ENCODE measurements at regions of chr18 and their contacts with region 1.

Region 1: DNA sequence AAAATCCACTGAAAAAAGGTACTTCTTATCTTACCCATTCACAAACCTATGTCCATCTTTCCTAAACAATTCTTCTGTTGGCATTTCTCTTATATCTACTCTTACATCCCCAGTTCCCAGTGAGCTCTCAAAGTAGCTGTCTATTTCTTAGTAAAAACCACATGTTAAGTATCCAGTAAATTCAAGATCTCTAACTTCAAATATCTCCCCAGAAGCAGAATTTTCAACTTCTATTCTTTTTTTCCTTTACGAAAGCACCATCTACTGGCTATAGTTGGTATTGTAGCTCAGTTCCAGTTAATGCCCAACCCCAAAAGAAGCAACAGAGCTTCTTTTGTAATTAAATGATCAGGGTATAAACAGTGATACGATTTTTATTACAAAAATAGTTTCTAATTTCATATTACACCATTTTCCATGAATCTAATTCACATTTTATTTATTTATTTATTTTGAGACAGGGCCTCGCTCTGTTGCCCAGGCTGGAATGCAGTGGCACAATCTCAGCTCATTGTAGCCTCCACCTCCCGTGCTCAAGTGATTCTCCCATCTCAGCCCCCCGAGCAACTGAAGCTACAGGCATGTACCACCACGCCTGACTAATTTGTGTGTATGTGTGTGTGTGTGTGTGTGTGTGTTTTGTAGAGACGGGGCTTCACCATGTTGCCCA is 28.5 kb downstream of the HRH4 start:
- DNase-seq: peak in 2 of 9 experiments; percentile 45 to 55
- ATAC-seq: peak; percentile 40
- H3K4me3 ChIP-seq: no peak overlapping the region
- H3K4me3 Mint-ChIP-seq: no peak overlapping the region
- H3K27ac ChIP-seq: no peak overlapping the region
- H3K27ac Mint-ChIP-seq: no peak overlapping the region
- H3K4me1 ChIP-seq: peaks cover 7% of the 10 kb centered on the region
- H3K4me1 Mint-ChIP-seq: peaks cover 16% of the 10 kb centered on the region
- H3K27me3 ChIP-seq: no peaks in the 10 kb centered on the region
- H3K27me3 Mint-ChIP-seq: peaks cover 8% of the 10 kb centered on the region
- CTCF ChIP-seq: peak; percentile 97

Region 2: DNA sequence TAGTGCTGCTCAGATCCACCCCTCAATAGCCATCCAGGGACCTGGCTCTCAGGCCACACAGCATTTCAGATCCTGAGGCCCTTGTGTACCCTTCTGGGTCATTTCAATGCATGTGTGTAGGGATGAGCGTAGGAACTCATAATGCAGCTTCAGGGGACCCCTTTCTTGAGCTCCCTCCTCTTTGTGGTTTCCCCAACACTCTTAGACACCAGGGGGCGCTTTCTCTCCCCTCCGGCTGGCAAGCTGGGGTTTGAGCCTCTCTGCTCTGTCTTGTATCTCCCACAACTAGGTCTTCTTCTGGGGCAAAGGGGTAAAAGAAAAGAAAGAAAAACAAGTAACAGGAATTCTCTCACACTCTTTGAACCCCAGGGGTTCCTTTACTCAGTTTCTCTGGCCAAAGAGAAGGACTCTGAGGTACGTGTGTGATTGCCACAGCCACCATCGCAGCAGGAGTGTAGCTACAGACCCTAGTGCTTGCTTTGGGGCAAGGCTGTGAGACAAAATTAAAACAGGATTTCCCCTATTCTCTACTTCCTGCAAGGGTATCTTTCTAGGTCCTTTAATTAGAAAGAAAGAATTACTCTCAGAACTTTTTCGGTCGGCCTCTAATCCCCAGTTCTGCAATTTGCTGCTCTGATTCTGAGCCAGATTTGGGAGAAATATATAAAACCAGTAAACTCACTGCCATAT is 312.1 kb before region 1 on chr18:
- CTCF ChIA-PET with region 1: interaction called, 15 read pairs
- POLR2A ChIA-PET with region 1: no interaction called
- intact Hi-C with region 1: loop called (anchors 5 to 10 kb)
- DNase-seq: peak in 6 of 9 experiments; percentile 22 to 47 (median 34)
- ATAC-seq: no peak
- H3K4me3 ChIP-seq: no peak overlapping the region
- H3K4me3 Mint-ChIP-seq: no peak overlapping the region
- H3K27ac ChIP-seq: no peak overlapping the region
- H3K27ac Mint-ChIP-seq: no peak overlapping the region
- H3K4me1 ChIP-seq: no peaks in the 10 kb centered on the region
- H3K4me1 Mint-ChIP-seq: no peaks in the 10 kb centered on the region
- H3K27me3 ChIP-seq: no peaks in the 10 kb centered on the region
- H3K27me3 Mint-ChIP-seq: peaks cover 4% of the 10 kb centered on the region
- CTCF ChIP-seq: no peak

Region 3: DNA sequence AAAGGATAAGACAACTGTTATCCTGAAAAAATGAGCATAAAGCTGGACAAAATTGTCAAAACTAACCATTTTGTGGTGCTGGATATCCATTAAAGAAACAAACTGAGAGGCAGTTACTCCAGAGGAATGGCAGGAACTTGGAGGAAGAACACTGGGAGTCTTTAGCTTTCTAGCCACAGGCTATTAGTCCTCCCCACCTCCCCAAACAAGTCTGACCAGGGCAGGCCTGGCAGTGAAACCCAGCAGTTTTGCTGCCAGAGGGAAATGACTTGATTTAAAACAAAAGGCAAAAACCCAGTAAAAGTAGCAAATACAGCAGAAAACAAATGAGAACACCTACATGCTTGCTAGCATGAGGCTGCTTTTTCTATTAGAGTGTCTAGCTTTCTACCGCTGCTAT is 126.2 kb before region 1 on chr18:
- CTCF ChIA-PET with region 1: interaction called, 92 read pairs
- POLR2A ChIA-PET with region 1: interaction called, 3 read pairs
- intact Hi-C with region 1: loop called (anchors 1 kb)
- DNase-seq: no peak
- ATAC-seq: no peak
- H3K4me3 ChIP-seq: no peak overlapping the region
- H3K4me3 Mint-ChIP-seq: no peak overlapping the region
- H3K27ac ChIP-seq: no peak overlapping the region
- H3K27ac Mint-ChIP-seq: no peak overlapping the region
- H3K4me1 ChIP-seq: no peaks in the 10 kb centered on the region
- H3K4me1 Mint-ChIP-seq: no peaks in the 10 kb centered on the region
- H3K27me3 ChIP-seq: no peaks in the 10 kb centered on the region
- H3K27me3 Mint-ChIP-seq: no peaks in the 10 kb centered on the region
- CTCF ChIP-seq: no peak

Region 4: DNA sequence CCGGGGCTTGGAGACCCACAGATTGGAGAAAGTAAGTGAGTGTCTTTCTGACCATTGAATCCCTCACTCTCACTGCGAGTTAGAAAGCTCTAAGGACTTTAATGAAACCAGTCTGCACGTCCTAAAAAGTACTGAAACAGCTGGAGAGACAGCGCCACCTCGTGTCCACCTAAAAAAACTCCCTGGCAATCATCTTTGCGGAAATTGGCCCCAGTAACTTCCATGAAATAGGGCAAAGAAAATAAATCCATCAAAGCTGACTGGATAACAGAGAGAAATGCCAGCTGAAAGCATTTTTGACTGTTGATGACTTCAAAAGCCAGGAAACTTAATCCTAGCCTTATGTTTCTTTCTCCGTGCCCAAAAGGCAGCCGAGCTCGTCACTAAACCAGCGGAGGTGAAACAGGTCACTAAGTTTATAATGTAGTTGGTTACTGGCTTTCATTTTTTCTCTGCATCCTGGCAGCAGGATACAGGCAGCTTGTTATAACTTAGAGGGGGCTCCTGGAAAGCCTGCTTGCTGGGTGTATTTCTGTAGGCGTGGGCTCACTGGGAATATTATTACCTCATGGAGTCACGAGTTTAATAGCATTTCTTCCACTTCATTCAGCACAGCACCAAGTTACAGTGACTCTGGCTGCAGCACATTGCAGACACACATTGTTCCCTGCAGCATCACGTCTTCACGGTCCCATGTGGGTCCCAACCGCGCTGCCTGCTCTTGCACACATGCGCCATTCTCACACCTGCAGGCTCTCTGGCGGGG is 238.0 kb after region 1 on chr18:
- CTCF ChIA-PET with region 1: interaction called, 20 read pairs
- POLR2A ChIA-PET with region 1: no interaction called
- intact Hi-C with region 1: loop called in 1 of 2 experiments (anchors 1 kb)
- DNase-seq: peak; percentile 14 to 72 (median 47)
- ATAC-seq: no peak
- H3K4me3 ChIP-seq: no peak overlapping the region
- H3K4me3 Mint-ChIP-seq: no peak overlapping the region
- H3K27ac ChIP-seq: no peak overlapping the region
- H3K27ac Mint-ChIP-seq: no peak overlapping the region
- H3K4me1 ChIP-seq: no peaks in the 10 kb centered on the region
- H3K4me1 Mint-ChIP-seq: no peaks in the 10 kb centered on the region
- H3K27me3 ChIP-seq: no peaks in the 10 kb centered on the region
- H3K27me3 Mint-ChIP-seq: peaks cover 15% of the 10 kb centered on the region
- CTCF ChIP-seq: peak; percentile 77

Region 5: DNA sequence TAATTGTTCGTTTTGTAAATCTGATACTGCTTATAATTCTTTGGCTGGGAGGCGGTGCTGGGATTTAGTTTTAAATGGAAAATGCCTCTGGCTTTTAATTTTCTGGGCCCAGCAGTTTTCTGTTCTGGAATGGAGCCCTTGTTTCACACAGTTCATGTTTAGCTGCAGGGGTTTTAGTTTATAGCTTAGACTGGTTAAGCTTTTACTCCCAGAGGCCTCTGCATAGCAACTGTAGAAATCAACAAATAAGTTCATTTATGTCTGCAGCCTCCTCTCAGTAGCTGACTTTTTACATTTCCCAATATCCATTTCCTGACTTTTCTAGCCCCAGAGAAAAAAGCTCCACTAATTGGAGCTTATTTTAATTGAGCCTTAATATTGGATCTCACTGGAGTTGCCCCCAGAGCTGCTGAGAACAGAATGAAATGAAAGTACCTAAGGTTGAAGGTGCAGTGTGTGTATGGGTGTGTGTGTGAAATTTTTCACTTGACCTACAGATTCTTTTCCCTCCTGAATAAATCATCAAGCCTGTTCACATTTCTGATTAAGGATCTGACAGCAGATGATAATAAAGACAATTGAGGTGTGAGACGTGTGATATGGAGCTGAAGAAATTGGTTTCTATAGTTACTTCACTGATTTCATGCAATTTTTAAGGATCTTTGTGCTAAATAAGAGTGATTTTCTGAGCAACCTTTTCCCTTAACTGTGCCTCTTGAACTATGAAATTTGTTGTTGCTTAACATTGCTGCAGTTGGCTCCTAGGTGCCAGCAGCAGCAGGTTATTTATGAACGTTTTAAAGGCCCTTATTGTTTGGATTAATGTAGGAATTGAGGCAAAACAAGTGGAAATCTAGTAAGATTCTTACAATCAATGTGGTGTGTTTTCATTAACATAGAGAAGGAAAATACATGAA is 1846.9 kb after region 1 on chr18:
- CTCF ChIA-PET with region 1: no interaction called
- POLR2A ChIA-PET with region 1: no interaction called
- intact Hi-C with region 1: loop called in 1 of 2 experiments (anchors 10 kb)
- DNase-seq: no peak
- ATAC-seq: no peak
- H3K4me3 ChIP-seq: no peak overlapping the region
- H3K4me3 Mint-ChIP-seq: no peak overlapping the region
- H3K27ac ChIP-seq: no peak overlapping the region
- H3K27ac Mint-ChIP-seq: no peak overlapping the region
- H3K4me1 ChIP-seq: no peaks in the 10 kb centered on the region
- H3K4me1 Mint-ChIP-seq: peaks cover 5% of the 10 kb centered on the region
- H3K27me3 ChIP-seq: no peaks in the 10 kb centered on the region
- H3K27me3 Mint-ChIP-seq: no peaks in the 10 kb centered on the region
- CTCF ChIP-seq: no peak